ENCODE measurements at regions of chr5 and their contacts with region 1.

Region 1: DNA sequence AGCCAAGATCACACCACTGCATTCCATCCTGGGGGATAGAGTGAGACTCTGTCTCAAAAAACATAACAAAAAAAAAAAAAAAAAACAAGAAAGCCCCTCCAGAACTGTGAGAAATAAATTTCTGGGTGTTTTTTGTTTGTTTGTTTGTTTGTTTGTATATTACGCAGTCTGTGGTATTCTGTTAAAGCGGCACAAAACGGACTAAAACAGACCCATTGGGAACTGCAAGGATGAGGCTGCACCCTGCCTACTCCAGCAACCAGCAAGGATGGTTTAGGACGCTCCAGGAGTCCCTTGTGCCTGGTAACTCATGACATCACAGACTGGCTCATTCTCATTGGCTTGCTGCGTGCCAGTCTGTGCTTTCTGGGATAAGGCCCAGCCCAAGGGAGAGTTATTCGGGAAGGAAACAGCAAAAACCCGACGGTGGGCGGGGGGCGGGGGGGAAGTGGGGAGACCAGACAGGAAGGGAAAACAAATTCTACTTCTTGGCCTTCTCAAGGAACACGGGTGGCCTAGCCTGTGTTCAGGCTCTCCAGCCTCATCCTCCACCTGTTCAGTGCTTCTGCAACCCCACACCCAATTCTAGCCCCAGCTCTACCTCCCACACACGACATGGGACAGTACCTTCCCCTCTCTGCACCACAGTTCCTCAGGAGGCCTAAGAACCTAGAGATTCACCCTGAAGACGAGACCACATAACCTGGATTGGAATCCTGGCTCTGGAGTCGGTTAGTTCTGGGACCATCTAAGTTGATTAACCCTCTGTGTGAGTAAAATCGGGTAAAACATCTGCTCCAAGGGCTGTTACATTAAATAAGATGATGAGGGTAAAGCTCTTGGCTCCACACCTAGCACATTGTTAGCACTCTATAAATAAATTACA is 2.8 kb downstream of the CD74 start:
- DNase-seq: peak; percentile 48
- ATAC-seq: peak; percentile 21
- H3K4me3 Mint-ChIP-seq: peak overlapping the region; percentile 98
- H3K27ac Mint-ChIP-seq: peak overlapping the region; percentile 100
- H3K4me1 Mint-ChIP-seq: peaks cover 29% of the 10 kb centered on the region
- H3K27me3 Mint-ChIP-seq: no peaks in the 10 kb centered on the region

Region 2: GRCh38 chr5:150309227-150309885 is 100.5 kb before region 1 on chr5:
- POLR2A ChIA-PET with region 1: no interaction called
- DNase-seq: no peak
- ATAC-seq: no peak
- H3K4me3 Mint-ChIP-seq: no peak overlapping the region
- H3K27ac Mint-ChIP-seq: no peak overlapping the region
- H3K4me1 Mint-ChIP-seq: peaks cover 7% of the 10 kb centered on the region
- H3K27me3 Mint-ChIP-seq: peaks cover 9% of the 10 kb centered on the region

Region 3: GRCh38 chr5:150398722-150399523 is 11.0 kb before region 1 on chr5:
- POLR2A ChIA-PET with region 1: interaction called, 32 read pairs
- DNase-seq: peak; percentile 44
- ATAC-seq: peak; percentile 57
- H3K4me3 Mint-ChIP-seq: no peak overlapping the region
- H3K27ac Mint-ChIP-seq: peak overlapping the region; percentile 81
- H3K4me1 Mint-ChIP-seq: peaks cover 25% of the 10 kb centered on the region
- H3K27me3 Mint-ChIP-seq: no peaks in the 10 kb centered on the region

Region 4: DNA sequence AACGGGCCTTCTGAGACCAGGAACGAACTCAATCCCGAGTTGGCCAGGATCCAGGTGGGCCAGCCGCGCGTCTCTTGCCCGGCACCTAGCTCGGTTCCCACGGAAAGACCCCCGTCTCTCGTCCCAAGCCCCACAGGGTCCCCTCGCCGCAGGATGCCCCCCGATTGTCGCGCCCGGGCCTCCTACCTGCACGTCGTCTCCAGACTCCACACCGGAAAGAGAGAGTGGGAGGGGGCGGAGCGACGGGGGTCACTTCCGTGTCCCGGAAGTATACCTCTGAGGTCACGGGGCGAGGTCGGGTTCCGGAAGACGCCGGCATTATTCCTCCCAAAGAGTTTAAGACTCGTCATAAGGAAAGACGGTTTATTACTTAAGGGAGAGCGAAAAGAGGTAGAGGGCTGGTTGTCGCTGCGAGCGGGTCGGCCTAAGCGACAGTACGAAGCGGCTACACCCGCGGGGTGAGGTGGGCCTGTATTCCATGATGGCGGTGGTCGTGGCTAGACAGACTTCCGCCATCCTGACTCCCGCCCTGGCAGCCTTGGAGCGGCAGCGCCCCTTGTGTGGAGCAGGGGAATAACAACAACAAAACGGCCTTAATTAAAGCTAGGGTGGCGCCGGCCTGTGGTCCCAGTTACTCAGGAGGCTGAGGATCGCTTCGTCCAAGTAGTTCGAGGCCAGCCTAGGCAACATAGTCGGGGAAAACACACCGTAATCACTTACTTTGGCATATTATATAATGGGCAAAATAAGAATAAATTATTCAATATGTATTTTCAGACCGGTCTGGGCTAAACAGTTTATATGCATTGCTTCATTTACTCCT is 39.8 kb after region 1 on chr5 and contains the start of gene RPS14:
- POLR2A ChIA-PET with region 1: interaction called, 18 read pairs
- DNase-seq: peak; percentile 94
- ATAC-seq: peak; percentile 90
- H3K4me3 Mint-ChIP-seq: peak within 1 kb of the TSS; percentile 96
- H3K27ac Mint-ChIP-seq: peak within 1 kb of the TSS; percentile 99
- H3K4me1 Mint-ChIP-seq: peaks cover 28% of the 10 kb centered on the region
- H3K27me3 Mint-ChIP-seq: no peaks in the 10 kb centered on the region
- total RNA-seq, gene RPS14: 2,811 to 2,872 TPM